ENCODE measurements at regions of chr22 and their contacts with region 1.

Region 1: DNA sequence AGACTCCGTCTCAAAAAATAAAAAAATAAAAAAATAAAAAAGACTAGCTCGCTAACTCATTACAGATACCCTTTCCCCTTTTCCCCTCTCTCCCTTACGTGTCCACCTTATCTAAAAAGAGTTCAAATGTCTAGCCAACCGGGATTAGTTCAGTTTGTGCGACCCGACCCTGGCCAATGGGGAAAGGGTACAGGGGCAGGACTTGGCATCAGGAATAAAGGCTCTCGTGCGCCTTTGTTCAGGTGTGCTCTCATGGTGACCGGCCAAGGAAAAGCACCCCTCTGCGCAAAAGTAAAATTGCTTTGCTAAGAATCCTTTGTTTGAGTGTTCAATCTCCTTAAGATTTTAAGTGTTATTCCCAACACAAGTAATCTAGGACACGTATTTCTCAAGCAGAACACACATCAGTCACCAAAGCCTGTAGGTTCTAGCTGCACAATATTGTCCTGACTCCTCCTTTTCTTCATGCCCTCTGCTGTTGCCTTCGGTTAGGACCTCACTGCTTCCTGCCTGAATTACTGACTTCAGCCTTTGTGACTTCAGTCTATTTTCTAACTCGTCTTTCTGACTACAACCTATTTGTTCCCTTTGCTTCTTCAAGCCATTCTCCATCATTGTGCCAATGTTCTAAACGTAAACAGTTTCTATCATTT is 20.7 kb upstream of the CECR2 start:
- DNase-seq: no peak
- H3K4me3 ChIP-seq: no peak overlapping the region
- H3K27ac ChIP-seq: no peak overlapping the region
- H3K4me1 ChIP-seq: no peaks in the 10 kb centered on the region
- H3K27me3 ChIP-seq: no peaks in the 10 kb centered on the region
- CTCF ChIP-seq: no peak
- POLR2A ChIP-seq: no peak

Region 2: GRCh38 chr22:17477391-17477833 is 128.8 kb after region 1 on chr22:
- intact Hi-C with region 1: loop called (anchors 10 kb)
- DNase-seq: no peak
- H3K4me3 ChIP-seq: no peak overlapping the region
- H3K27ac ChIP-seq: no peak overlapping the region
- H3K4me1 ChIP-seq: no peaks in the 10 kb centered on the region
- H3K27me3 ChIP-seq: peaks cover 0 to 18% of the 10 kb centered on the region in 2 donors
- CTCF ChIP-seq: no peak
- POLR2A ChIP-seq: no peak

Measured in breast epithelium (tissue), 4 donors.